Naive thymus-derived CD4-positive, alpha-beta T cell (primary cell): ENCODE measurements at regions of chr18 and their contacts with region 1.

Region 1: GRCh38 chr18:54671291-54671881 is 80.3 kb downstream of the DYNAP start:
- DNase-seq: peak in 4 of 9 donors; percentile 16 to 30 (median 20)
- ATAC-seq: no peak
- H3K4me3 ChIP-seq: no peak overlapping the region
- H3K4me3 Mint-ChIP-seq: no peak overlapping the region
- H3K27ac ChIP-seq: no peak overlapping the region
- H3K27ac Mint-ChIP-seq: no peak overlapping the region
- H3K4me1 ChIP-seq: no peaks in the 10 kb centered on the region
- H3K4me1 Mint-ChIP-seq: no peaks in the 10 kb centered on the region
- H3K27me3 ChIP-seq: no peaks in the 10 kb centered on the region
- H3K27me3 Mint-ChIP-seq: peaks cover 0 to 10% (median 9%) of the 10 kb centered on the region in 5 donors

Region 2: GRCh38 chr18:53567929-53568574 is 1103.3 kb before region 1 on chr18:
- CTCF ChIA-PET with region 1: no interaction called
- POLR2A ChIA-PET with region 1: no interaction called
- intact Hi-C with region 1: loop called in 1 of 2 experiments (anchors 5 kb)
- DNase-seq: peak in 4 of 9 donors; percentile 1 to 10 (median 4)
- ATAC-seq: no peak
- H3K4me3 ChIP-seq: no peak overlapping the region
- H3K4me3 Mint-ChIP-seq: no peak overlapping the region
- H3K27ac ChIP-seq: no peak overlapping the region
- H3K27ac Mint-ChIP-seq: no peak overlapping the region
- H3K4me1 ChIP-seq: no peaks in the 10 kb centered on the region
- H3K4me1 Mint-ChIP-seq: no peaks in the 10 kb centered on the region
- H3K27me3 ChIP-seq: no peaks in the 10 kb centered on the region
- H3K27me3 Mint-ChIP-seq: peaks cover 0 to 11% (median 4%) of the 10 kb centered on the region in 5 donors

Region 3: GRCh38 chr18:54392543-54393023 is 278.8 kb before region 1 on chr18:
- CTCF ChIA-PET with region 1: interaction called, 3 read pairs
- POLR2A ChIA-PET with region 1: no interaction called
- intact Hi-C with region 1: loop called in 1 of 2 experiments (anchors 1 kb)
- DNase-seq: peak in 7 of 9 donors; percentile 5 to 55 (median 39)
- ATAC-seq: peak; percentile 80
- H3K4me3 ChIP-seq: no peak overlapping the region
- H3K4me3 Mint-ChIP-seq: no peak overlapping the region
- H3K27ac ChIP-seq: no peak overlapping the region
- H3K27ac Mint-ChIP-seq: no peak overlapping the region
- H3K4me1 ChIP-seq: no peaks in the 10 kb centered on the region
- H3K4me1 Mint-ChIP-seq: peaks cover 0 to 37% (median 0%) of the 10 kb centered on the region in 7 donors
- H3K27me3 ChIP-seq: no peaks in the 10 kb centered on the region
- H3K27me3 Mint-ChIP-seq: peaks cover 9 to 29% (median 16%) of the 10 kb centered on the region in 5 donors

Region 4: DNA sequence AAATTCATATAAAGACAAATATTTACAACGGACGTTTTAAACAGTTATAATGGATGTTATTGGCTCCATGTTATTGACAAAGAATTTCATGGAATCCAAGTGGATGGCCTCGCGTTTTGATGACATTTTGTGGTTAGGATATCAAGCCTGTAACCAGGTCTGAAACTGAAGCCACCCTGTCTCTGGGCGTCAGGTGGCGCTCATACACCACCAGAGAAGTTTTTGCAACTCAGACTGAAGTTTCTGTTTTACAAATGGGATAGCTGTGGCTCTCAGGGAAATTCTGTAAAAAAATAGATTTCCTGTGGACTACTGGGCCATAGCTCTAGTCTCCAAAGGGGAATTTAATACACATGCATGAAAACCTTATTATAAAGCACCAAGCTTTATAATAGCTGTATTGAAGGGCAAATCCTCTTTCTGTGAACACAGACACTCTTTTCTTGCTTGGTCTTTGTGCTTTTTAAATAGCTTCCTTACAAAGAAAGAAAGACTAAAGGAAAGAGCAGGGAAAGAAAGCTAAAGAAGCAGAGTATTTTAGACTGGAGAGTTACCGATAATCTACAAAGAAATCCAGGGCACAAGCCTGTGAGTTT is 227.0 kb before region 1 on chr18:
- CTCF ChIA-PET with region 1: no interaction called
- POLR2A ChIA-PET with region 1: no interaction called
- intact Hi-C with region 1: loop called in 1 of 2 experiments (anchors 1 kb)
- DNase-seq: peak in 2 of 9 donors; percentile 11 to 31
- ATAC-seq: no peak
- H3K4me3 ChIP-seq: no peak overlapping the region
- H3K4me3 Mint-ChIP-seq: no peak overlapping the region
- H3K27ac ChIP-seq: no peak overlapping the region
- H3K27ac Mint-ChIP-seq: no peak overlapping the region
- H3K4me1 ChIP-seq: no peaks in the 10 kb centered on the region
- H3K4me1 Mint-ChIP-seq: no peaks in the 10 kb centered on the region
- H3K27me3 ChIP-seq: no peaks in the 10 kb centered on the region
- H3K27me3 Mint-ChIP-seq: peaks cover 12 to 50% (median 39%) of the 10 kb centered on the region in 5 donors

Region 5: DNA sequence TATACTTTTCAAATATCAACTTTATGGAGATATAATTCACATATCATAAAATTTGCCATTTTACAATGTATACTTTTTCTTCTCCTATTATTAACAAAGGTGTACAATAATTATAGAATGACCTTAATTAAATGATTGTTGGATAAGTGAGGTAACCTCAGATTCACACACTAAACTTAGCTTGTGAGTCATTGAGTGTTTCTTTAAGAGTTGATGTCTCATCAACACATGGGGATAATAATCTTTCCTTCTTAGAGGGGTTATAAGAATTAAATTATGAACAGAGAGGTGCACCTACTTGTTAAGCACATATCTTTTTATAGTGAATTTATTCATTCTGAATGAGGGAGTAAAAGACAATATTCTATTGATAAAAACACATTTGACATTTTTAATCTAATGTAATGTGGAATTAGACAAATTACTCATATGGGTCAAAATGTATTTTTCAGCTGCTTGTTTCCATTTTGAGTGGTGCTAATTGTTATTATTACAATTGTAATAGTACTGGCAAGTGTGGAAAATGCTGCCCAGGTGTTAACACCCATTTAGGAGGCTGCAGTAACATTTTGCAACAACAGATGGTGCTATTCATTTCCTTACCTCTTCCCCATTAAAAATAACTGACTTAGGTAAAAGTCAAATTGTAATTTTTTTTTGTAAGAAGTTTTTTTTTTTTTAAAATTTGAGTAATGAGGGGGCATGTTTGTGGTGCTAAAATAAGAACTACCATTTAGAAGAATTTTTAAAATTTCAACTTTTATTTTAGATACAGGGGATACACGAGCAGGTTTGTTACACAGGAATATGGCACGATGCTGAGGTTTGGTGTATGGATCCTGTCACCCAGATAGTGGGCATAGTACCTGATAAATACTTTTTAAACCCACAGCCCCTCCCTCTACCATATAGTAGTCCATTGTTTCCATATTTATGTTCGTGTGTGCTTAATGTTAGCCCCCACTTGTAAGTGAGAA is 112.5 kb before region 1 on chr18:
- CTCF ChIA-PET with region 1: no interaction called
- POLR2A ChIA-PET with region 1: no interaction called
- intact Hi-C with region 1: loop called (anchors 1 to 2 kb)
- DNase-seq: peak in 3 of 9 donors; percentile 6 to 12 (median 7)
- ATAC-seq: no peak
- H3K4me3 ChIP-seq: no peak overlapping the region
- H3K4me3 Mint-ChIP-seq: no peak overlapping the region
- H3K27ac ChIP-seq: no peak overlapping the region
- H3K27ac Mint-ChIP-seq: no peak overlapping the region
- H3K4me1 ChIP-seq: no peaks in the 10 kb centered on the region
- H3K4me1 Mint-ChIP-seq: no peaks in the 10 kb centered on the region
- H3K27me3 ChIP-seq: no peaks in the 10 kb centered on the region
- H3K27me3 Mint-ChIP-seq: peaks cover 0 to 8% (median 0%) of the 10 kb centered on the region in 5 donors

Region 6: DNA sequence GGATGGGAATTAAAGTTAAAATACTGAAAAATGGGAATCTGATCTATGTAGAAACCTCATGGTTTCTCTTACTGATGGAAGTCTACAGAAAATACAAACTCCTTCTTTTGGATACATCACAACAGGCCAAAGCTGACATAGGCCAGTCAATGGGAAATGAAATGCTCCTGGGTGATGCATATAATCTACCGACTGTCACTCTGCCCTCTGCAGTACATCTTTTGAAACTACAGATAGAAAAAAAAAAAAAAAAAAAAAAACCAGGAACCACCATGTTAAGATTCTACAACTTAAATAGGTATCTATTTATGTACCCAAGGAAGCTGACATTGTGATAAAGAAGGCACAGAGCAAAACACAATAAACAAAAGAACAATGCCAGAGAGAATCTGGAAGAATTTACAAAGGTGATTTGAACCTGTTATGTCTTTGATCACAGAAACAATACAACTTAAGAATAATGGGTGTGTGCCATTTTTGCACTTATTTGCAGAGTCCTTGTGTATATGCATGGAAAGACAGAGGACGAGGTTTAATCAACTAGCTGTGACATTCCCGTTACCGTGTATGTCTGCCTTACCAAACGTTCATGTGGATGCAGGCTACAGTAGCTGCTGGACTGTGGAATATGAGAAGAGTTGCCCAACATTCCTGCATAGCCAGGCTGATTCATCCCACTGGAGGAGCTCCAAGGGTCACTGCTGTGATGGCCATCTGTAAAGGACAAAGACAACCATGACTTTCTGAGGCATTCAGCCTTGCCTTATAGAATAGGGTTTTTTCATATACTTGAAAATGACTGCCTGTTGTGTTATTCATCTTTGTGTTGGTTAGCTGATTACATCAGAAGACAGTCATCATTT is 603.9 kb after region 1 on chr18:
- CTCF ChIA-PET with region 1: no interaction called
- POLR2A ChIA-PET with region 1: no interaction called
- intact Hi-C with region 1: no loop called
- DNase-seq: no peak
- ATAC-seq: no peak
- H3K4me3 ChIP-seq: no peak overlapping the region
- H3K4me3 Mint-ChIP-seq: no peak overlapping the region
- H3K27ac ChIP-seq: no peak overlapping the region
- H3K27ac Mint-ChIP-seq: no peak overlapping the region
- H3K4me1 ChIP-seq: no peaks in the 10 kb centered on the region
- H3K4me1 Mint-ChIP-seq: no peaks in the 10 kb centered on the region
- H3K27me3 ChIP-seq: no peaks in the 10 kb centered on the region
- H3K27me3 Mint-ChIP-seq: peaks cover 0 to 3% (median 0%) of the 10 kb centered on the region in 5 donors